Activated CD4-positive, alpha-beta T cell treated with anti-CD3 and anti-CD28 coated beads for 36 hours (primary cell): ENCODE measurements at regions of chr1 and their contacts with region 1.

Region 1: DNA sequence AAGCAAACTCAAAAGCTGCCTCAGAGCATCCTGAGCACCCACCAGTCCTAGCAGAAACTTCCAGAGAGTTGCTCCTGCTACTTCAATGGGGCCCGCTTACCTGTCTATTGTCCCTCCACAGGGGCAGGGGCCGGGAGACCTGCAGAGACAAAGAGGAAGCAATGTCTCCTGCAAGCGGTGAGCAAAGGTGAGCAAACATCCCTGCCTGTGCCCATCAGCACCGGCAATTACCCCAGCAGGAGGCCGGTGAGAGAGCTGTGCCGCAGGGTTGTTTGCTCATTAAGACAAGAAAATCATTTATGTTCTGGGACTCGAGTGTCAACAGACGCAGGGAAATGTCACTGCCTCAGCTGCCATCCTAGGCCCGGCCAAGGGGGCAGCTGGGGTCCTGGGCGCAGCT is 53.8 kb upstream of the TARDBP start:
- DNase-seq: no peak
- ATAC-seq: no peak
- H3K4me3 Mint-ChIP-seq: no peak overlapping the region
- H3K27ac Mint-ChIP-seq: no peak overlapping the region
- H3K4me1 Mint-ChIP-seq: peaks cover 2% of the 10 kb centered on the region
- H3K27me3 Mint-ChIP-seq: peaks cover 9% of the 10 kb centered on the region

Region 2: GRCh38 chr1:10888286-10888685 is 70.3 kb before region 1 on chr1:
- CTCF ChIA-PET with region 1: no interaction called
- POLR2A ChIA-PET with region 1: no interaction called
- intact Hi-C with region 1: loop called in 1 of 2 experiments (anchors 5 kb)
- DNase-seq: no peak
- ATAC-seq: no peak
- H3K4me3 Mint-ChIP-seq: no peak overlapping the region
- H3K27ac Mint-ChIP-seq: no peak overlapping the region
- H3K4me1 Mint-ChIP-seq: peaks cover 3% of the 10 kb centered on the region
- H3K27me3 Mint-ChIP-seq: peaks cover 40% of the 10 kb centered on the region